Cardiac septum (tissue), 1 donor: ENCODE measurements at regions of chr2 and their contacts with region 1.

Region 1: DNA sequence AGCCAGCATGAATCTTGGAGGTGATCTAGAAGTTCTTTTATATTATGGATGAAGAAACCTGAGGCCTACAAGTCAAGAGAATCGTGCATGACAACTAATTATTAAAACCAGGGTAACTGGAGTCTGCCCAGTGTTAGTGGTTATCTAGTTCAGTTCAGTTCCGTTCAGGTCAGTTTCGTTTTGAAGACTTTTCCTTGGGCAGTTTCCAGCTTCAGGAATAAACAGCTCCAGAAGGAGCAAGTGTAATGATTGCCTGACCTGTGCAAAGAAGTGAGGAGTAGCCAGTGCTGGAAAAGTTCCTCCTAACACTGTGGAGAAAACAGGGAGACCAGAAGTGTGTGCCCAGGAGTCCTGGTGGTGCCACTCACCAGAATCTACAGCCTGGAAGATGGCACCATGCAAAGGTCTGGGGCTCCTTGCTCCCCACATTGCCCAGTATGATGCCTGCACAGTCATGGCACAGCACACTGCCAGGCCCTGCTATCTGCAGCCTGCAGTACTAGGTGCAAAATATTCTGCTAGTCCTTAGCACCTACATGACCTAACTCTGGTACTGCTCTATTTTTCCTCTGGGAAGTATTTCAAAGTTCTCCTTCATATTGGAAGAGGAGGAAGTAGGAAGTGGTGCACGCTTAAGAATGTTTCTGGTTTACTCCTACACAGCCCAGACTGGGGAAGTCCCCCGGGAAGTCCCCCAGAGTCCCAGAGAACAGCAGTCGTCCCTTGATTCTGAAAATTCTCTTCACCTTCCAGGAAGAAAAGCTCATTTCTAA is 65.8 kb downstream of the SUMO1 start:
- DNase-seq: no peak

Region 2: GRCh38 chr2:201644001-201644400 is 528.6 kb before region 1 on chr2:
- intact Hi-C with region 1: no loop called
- DNase-seq: no peak

Region 3: GRCh38 chr2:202096736-202097135 is 75.9 kb before region 1 on chr2:
- intact Hi-C with region 1: no loop called
- DNase-seq: no peak

Region 4: GRCh38 chr2:202109737-202110184 is 62.9 kb before region 1 on chr2:
- intact Hi-C with region 1: loop called (anchors 5 kb)
- DNase-seq: no peak